Sigmoid colon (tissue), 7 donors: ENCODE measurements at regions of chr20 and their contacts with region 1.

Region 1: DNA sequence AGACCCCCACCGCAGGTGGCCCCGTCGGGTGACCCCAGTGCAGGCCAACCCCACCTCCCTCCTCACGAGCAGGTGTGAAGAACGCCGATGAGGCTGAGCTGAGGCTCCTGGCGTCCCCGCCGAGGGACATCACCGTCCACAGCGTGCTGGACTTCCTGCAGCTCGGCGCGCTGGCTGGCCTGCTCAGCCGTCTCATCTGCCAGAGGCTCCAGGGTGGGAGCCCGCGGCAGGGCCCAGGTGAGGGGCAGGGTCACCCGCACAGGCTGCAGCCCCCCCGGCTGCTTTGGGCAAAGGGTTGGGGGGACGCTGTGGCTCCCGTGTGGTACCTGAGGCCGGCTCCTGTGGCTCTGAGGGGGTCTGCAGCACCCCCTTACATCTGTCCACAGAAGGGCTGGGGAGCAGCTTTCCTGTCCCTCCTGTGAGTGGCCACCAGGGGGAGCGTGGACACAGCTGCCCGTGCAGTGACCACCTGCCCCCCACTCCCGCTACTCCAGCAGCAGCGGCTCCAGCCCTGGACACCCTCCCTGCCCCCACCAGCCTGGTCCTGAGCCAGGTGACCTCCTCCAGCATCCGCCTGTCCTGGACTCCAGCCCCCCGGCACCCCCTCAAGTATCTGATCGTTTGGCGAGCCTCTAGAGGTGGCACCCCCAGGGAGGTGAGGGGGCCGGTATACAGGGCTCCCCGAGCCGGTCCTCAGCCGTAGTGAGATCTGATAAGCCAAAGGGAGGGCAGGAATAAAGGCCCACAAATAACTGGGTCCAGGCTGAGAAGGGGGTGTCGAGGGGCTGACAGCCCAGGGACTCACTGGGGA is 16.5 kb downstream of the COL20A1 start:
- DNase-seq: no peak
- H3K4me3 ChIP-seq: no peak overlapping the region
- H3K27ac ChIP-seq: no peak overlapping the region
- H3K4me1 ChIP-seq: no peaks in the 10 kb centered on the region
- H3K27me3 ChIP-seq: peaks cover 11 to 55% (median 42%) of the 10 kb centered on the region in 3 donors
- CTCF ChIP-seq: peak; percentile 8 to 88 (median 64)
- EP300 ChIP-seq: no peak
- POLR2A ChIP-seq: no peak

Region 2: DNA sequence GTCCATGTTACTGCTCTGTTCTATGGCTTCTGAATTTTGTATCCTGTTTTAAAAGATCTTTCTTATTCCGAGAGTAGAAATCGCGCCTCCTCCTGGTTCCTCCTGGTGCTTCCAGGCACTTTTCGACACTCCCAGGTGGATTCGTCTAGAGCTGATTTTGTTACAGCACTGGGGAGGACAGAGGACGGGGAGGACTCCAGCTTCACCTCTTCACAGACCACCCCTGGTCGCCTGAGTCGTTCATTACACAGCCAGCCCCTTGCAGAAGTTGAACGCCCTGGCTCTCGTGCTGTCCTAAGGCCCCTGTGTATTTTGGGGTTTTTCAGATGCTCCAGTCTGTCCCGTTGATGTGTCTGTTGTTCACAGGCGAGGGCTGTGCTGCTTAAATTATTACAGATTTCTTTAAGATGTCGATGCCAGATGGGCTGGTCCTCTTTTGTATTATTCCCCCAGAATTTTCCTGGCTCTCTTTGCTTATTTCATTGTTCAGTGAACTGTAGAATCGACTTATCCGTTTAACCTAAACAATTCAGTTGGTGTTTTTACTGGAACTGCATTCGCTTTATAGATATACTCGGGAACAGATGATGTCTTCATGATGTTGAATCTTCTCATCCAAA is 14.0 kb after region 1 on chr20:
- intact Hi-C with region 1: no loop called
- DNase-seq: peak; percentile 22
- H3K4me3 ChIP-seq: no peak overlapping the region
- H3K27ac ChIP-seq: no peak overlapping the region
- H3K4me1 ChIP-seq: peaks cover 0 to 7% (median 0%) of the 10 kb centered on the region in 4 donors
- H3K27me3 ChIP-seq: peaks cover 0 to 63% (median 3%) of the 10 kb centered on the region in 3 donors
- CTCF ChIP-seq: no peak
- EP300 ChIP-seq: no peak
- POLR2A ChIP-seq: no peak

Region 3: GRCh38 chr20:63366390-63367365 is 57.2 kb after region 1 on chr20:
- intact Hi-C with region 1: no loop called
- DNase-seq: no peak
- H3K4me3 ChIP-seq: no peak overlapping the region
- H3K27ac ChIP-seq: no peak overlapping the region
- H3K4me1 ChIP-seq: no peaks in the 10 kb centered on the region
- H3K27me3 ChIP-seq: peaks cover 10 to 82% (median 26%) of the 10 kb centered on the region in 3 donors
- CTCF ChIP-seq: no peak
- EP300 ChIP-seq: no peak
- POLR2A ChIP-seq: no peak

Region 4: GRCh38 chr20:63381807-63382322 is 72.4 kb after region 1 on chr20:
- intact Hi-C with region 1: loop called (anchors 5 kb)
- DNase-seq: no peak
- H3K4me3 ChIP-seq: no peak overlapping the region
- H3K27ac ChIP-seq: no peak overlapping the region
- H3K4me1 ChIP-seq: no peaks in the 10 kb centered on the region
- H3K27me3 ChIP-seq: peaks cover 10 to 78% (median 36%) of the 10 kb centered on the region in 3 donors
- CTCF ChIP-seq: peak; percentile 22 to 76 (median 60)
- EP300 ChIP-seq: no peak
- POLR2A ChIP-seq: no peak